Activated T-helper 1 cell treated with anti-CD3 and anti-CD28 coated beads, Interleukin-12 subunit alpha, Interleukin-12 subunit beta, Interleukin-2, Interleukin-4 antibody, amounts not matched to agents 30 ng/mL and 10 ng/mL and 1 ng/mL, durations not matched to agents 14 hours and 24 hours and 36 hours (primary cell): ENCODE measurements at regions of chr5 and their contacts with region 1.

Region 1: GRCh38 chr5:154754460-154755360 is 467 bp upstream of the LARP1 start:
- DNase-seq: peak; percentile 98
- H3K4me3 Mint-ChIP-seq: peak overlapping the region; percentile 89
- H3K27ac Mint-ChIP-seq: peak overlapping the region; percentile 97
- H3K4me1 Mint-ChIP-seq: peaks cover 39% of the 10 kb centered on the region
- H3K27me3 Mint-ChIP-seq: peaks cover 1% of the 10 kb centered on the region

Region 2: GRCh38 chr5:154038707-154039457 is 715.8 kb before region 1 on chr5 and contains the starts of genes FAM114A2 and MFAP3:
- intact Hi-C with region 1: loop called (anchors 2 kb)
- DNase-seq: peak; percentile 88
- H3K4me3 Mint-ChIP-seq: peak within 1 kb of the TSS; percentile 98
- H3K27ac Mint-ChIP-seq: peak within 1 kb of the TSS; percentile 94
- H3K4me1 Mint-ChIP-seq: peaks cover 50% of the 10 kb centered on the region
- H3K27me3 Mint-ChIP-seq: no peaks in the 10 kb centered on the region
- total RNA-seq, gene FAM114A2: 28.3 and 28.7 TPM in 2 replicates
- total RNA-seq, gene MFAP3: 24.3 and 29.9 TPM in 2 replicates

Region 3: GRCh38 chr5:154445422-154446182 is 309.1 kb before region 1 on chr5 and contains the start of gene SAP30L:
- intact Hi-C with region 1: loop called (anchors 1 kb)
- DNase-seq: peak; percentile 96
- H3K4me3 Mint-ChIP-seq: peak within 1 kb of the TSS; percentile 99
- H3K27ac Mint-ChIP-seq: peak within 1 kb of the TSS; percentile 95
- H3K4me1 Mint-ChIP-seq: peaks cover 65% of the 10 kb centered on the region
- H3K27me3 Mint-ChIP-seq: no peaks in the 10 kb centered on the region
- total RNA-seq, gene SAP30L: 37.5 and 44.4 TPM in 2 replicates

Region 4: GRCh38 chr5:154618696-154619095 is 136.0 kb before region 1 on chr5:
- intact Hi-C with region 1: no loop called
- DNase-seq: no peak
- H3K4me3 Mint-ChIP-seq: no peak overlapping the region
- H3K27ac Mint-ChIP-seq: no peak overlapping the region
- H3K4me1 Mint-ChIP-seq: no peaks in the 10 kb centered on the region
- H3K27me3 Mint-ChIP-seq: peaks cover 14% of the 10 kb centered on the region

Region 5: DNA sequence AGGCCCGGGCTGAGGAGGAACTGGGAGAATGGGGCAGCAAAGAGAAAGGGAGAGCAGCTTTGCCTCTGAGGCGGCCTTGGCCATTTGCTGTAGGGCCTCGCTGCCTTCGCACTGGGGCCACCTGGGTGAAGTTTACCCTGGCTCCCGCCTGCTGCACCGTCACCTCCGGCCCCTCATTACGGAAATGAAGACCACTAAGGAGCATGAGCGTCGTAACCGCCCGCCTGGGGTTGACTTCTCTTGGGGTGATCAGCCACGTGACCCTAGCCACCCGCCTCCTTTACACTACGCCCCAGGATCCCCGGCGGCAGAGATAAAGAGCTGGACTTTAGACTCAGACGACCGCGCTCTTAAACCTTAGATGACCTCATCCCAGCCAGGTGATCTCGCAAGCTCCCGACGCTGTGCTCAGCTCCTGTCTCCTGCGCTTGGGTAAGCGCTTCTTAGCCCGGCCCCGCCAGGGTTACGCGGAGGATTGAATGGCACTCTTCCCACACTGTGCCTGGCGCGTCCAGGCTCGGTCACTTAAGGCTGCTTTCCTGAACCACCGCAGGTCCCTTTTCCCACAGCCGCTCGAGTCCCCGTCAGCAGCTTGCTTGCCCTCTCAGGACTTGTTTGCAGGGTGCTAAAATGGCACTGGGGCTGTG is 107.5 kb before region 1 on chr5:
- intact Hi-C with region 1: loop called (anchors 1 kb)
- DNase-seq: no peak
- H3K4me3 Mint-ChIP-seq: peak overlapping the region; percentile 72
- H3K27ac Mint-ChIP-seq: no peak overlapping the region
- H3K4me1 Mint-ChIP-seq: peaks cover 16% of the 10 kb centered on the region
- H3K27me3 Mint-ChIP-seq: peaks cover 23% of the 10 kb centered on the region

Region 6: DNA sequence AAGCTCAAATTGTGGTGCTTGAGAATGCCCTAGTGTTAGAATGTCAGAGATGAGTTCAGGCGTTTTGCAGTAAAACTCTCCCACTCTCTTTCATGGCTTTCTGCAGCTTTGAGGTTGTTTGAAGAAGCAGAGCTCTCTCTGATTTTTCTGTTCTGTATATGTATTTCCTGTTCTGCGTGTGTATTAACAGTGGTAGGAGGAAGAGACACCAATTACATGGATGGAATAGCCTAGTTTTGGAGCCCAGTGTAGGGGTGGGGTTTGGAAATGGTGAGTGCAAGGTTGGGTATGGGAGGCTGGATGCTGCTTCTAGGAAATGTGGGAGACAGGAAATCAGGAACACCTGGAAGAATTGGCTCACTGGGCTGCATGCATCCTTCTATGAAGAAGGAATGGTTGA is 12.9 kb after region 1 on chr5:
- intact Hi-C with region 1: loop called (anchors 1 kb)
- DNase-seq: no peak
- H3K4me3 Mint-ChIP-seq: peak overlapping the region; percentile 1
- H3K27ac Mint-ChIP-seq: peak overlapping the region; percentile 37
- H3K4me1 Mint-ChIP-seq: peaks cover 62% of the 10 kb centered on the region
- H3K27me3 Mint-ChIP-seq: no peaks in the 10 kb centered on the region

Region 7: GRCh38 chr5:154811653-154812365 is 57.1 kb after region 1 on chr5:
- intact Hi-C with region 1: loop called (anchors 1 kb)
- DNase-seq: peak; percentile 37
- H3K4me3 Mint-ChIP-seq: no peak overlapping the region
- H3K27ac Mint-ChIP-seq: no peak overlapping the region
- H3K4me1 Mint-ChIP-seq: peaks cover 42% of the 10 kb centered on the region
- H3K27me3 Mint-ChIP-seq: no peaks in the 10 kb centered on the region

Region 8: DNA sequence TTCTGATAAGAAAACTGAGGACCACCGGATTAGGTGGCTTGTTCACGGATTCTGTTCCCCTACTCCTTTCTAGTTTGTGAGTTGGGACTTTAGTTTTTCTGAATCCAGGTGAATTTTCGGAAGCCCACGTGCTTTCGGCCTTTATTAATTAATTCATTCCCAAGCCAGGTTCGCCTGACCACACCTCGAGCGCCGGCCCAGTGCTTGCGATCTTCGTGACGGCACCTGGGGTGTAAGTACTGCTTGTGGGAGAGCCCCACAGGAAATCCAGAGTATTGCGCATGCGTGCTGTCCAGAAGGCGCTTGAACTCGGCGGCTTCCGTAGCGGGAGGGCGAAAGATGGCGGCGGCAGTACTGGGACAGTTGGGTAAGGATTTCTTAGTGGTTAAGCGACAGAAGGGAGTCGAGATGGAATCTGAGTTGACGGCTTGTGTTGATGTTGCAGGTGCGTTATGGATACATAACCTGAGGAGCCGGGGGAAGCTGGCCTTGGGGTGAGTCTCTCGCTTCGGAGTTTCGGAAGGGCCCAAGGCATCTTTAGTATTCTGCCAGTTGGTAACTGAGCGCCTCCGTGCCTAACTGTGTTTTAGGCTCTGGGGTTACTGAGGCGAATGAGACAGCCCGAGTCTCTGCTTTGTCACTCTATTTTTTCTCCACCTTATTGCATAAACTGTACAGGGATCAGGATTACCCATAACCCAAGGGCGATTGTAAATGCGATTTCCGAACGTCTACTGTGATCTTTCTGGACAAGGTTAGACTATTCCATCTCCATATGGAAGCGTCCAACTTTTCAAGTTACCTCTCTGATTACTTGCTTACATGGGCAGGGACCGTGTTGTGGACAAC is 186.3 kb after region 1 on chr5 and contains the start of gene MRPL22:
- intact Hi-C with region 1: loop called (anchors 1 kb)
- DNase-seq: peak; percentile 93
- H3K4me3 Mint-ChIP-seq: peak within 1 kb of the TSS; percentile 94
- H3K27ac Mint-ChIP-seq: peak within 1 kb of the TSS; percentile 93
- H3K4me1 Mint-ChIP-seq: peaks cover 18% of the 10 kb centered on the region
- H3K27me3 Mint-ChIP-seq: peaks cover 3% of the 10 kb centered on the region
- total RNA-seq, gene MRPL22: 73.1 and 78.1 TPM in 2 replicates